Upper lobe of right lung (tissue), 1 donor: ENCODE measurements at regions of chr5 and their contacts with region 1.

Region 1: GRCh38 chr5:1004461-1005248 is 3.9 kb upstream of the NKD2 start:
- DNase-seq: peak; percentile 87
- ATAC-seq: peak; percentile 76
- H3K4me3 ChIP-seq: peak overlapping the region; percentile 53
- H3K27ac ChIP-seq: peak overlapping the region; percentile 74
- H3K4me1 ChIP-seq: peaks cover 16% of the 10 kb centered on the region
- H3K27me3 ChIP-seq: peaks cover 15% of the 10 kb centered on the region
- CTCF ChIP-seq: peak; percentile 51

Region 2: DNA sequence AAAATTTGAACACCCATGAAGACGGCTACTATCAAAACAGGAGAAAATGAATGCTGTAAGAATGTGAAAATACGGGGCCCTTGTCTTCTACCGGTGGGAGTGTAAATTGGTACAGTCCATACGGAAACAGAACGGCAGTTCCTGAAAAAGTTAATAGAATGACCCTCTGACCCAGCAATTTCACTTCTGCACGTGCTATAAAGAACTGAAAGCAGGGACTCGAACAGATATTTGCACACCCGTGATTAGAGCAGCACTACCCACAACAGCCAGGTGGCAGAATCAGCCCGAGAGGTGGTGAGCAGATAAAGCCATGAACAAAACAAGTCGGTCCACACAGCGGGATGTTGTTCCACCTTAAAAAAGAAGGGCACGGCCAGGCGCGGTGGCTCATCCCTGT is 129.8 kb after region 1 on chr5:
- intact Hi-C with region 1: loop called (anchors 10 kb)
- DNase-seq: no peak
- ATAC-seq: no peak
- H3K4me3 ChIP-seq: no peak overlapping the region
- H3K27ac ChIP-seq: no peak overlapping the region
- H3K4me1 ChIP-seq: peaks cover 9% of the 10 kb centered on the region
- H3K27me3 ChIP-seq: no peaks in the 10 kb centered on the region
- CTCF ChIP-seq: no peak